ENCODE measurements at regions of chrX and their contacts with region 1.

Region 1: GRCh38 chrX:123960042-123960611 is 1.4 kb upstream of the STAG2 start:
- DNase-seq: peak; percentile 91
- H3K4me3 Mint-ChIP-seq: peak overlapping the region; percentile 96
- H3K27ac Mint-ChIP-seq: peak overlapping the region; percentile 99
- H3K4me1 Mint-ChIP-seq: peaks cover 13% of the 10 kb centered on the region
- H3K27me3 Mint-ChIP-seq: no peaks in the 10 kb centered on the region

Region 2: GRCh38 chrX:122014531-122014930 is 1945.6 kb before region 1 on chrX:
- CTCF ChIA-PET with region 1: no interaction called
- intact Hi-C with region 1: no loop called
- DNase-seq: no peak
- H3K4me3 Mint-ChIP-seq: no peak overlapping the region
- H3K27ac Mint-ChIP-seq: no peak overlapping the region
- H3K4me1 Mint-ChIP-seq: no peaks in the 10 kb centered on the region
- H3K27me3 Mint-ChIP-seq: no peaks in the 10 kb centered on the region

Region 3: GRCh38 chrX:123603491-123603890 is 356.6 kb before region 1 on chrX:
- CTCF ChIA-PET with region 1: no interaction called
- intact Hi-C with region 1: no loop called
- DNase-seq: no peak
- H3K4me3 Mint-ChIP-seq: no peak overlapping the region
- H3K27ac Mint-ChIP-seq: no peak overlapping the region
- H3K4me1 Mint-ChIP-seq: no peaks in the 10 kb centered on the region
- H3K27me3 Mint-ChIP-seq: no peaks in the 10 kb centered on the region

Region 4: DNA sequence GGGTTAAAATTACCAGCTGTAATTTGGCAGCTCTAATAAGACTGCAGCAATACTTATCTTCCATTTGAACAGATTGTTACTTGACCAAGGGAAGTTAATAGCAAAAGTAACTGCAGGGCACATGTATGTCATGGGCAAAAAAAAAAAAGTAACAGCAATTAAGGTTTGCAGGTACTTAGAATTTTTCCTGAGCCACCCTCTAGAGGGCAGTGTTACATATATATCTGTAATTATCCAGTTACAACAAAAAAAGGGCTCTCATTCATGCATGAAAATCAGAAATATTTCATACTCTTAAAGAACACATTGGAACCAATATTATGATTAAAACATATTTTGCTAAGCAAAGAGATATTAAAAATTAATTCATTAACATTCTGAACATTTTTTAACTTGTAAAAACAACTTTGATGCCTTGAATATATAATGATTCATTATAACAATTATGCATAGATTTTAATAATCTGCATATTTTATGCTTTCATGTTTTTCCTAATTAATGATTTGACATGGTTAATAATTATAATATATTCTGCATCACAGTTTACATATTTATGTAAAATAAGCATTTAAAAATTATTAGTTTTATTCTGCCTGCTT is 75.2 kb before region 1 on chrX:
- CTCF ChIA-PET with region 1: no interaction called
- intact Hi-C with region 1: loop called (anchors 2 kb)
- DNase-seq: peak; percentile 42
- H3K4me3 Mint-ChIP-seq: no peak overlapping the region
- H3K27ac Mint-ChIP-seq: no peak overlapping the region
- H3K4me1 Mint-ChIP-seq: peaks cover 8% of the 10 kb centered on the region
- H3K27me3 Mint-ChIP-seq: no peaks in the 10 kb centered on the region

Region 5: DNA sequence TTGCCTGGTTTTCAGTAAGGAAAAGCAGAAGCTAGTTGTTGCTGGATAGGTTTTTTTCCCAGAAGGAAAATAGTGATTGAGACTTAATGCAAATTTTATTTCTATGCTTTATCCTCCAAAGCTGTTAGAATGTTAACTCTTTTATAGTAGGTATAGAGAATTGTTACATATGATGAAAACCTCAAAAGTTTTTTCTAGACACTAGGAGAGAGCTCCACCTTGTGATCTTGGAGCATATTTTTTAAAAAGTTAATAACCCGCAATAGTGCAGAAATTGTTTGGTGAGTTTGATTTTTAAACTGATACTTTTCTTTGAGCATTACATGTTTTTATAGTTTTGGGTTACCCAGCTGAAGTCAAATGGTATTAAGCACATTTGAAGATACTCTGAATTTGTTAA is 57.9 kb after region 1 on chrX:
- CTCF ChIA-PET with region 1: interaction called, 8 read pairs
- intact Hi-C with region 1: loop called (anchors 1 kb)
- DNase-seq: no peak
- H3K4me3 Mint-ChIP-seq: no peak overlapping the region
- H3K27ac Mint-ChIP-seq: no peak overlapping the region
- H3K4me1 Mint-ChIP-seq: peaks cover 30% of the 10 kb centered on the region
- H3K27me3 Mint-ChIP-seq: no peaks in the 10 kb centered on the region

Region 6: GRCh38 chrX:124151195-124151594 is 191.1 kb after region 1 on chrX:
- CTCF ChIA-PET with region 1: no interaction called
- intact Hi-C with region 1: no loop called
- DNase-seq: no peak
- H3K4me3 Mint-ChIP-seq: no peak overlapping the region
- H3K27ac Mint-ChIP-seq: no peak overlapping the region
- H3K4me1 Mint-ChIP-seq: no peaks in the 10 kb centered on the region
- H3K27me3 Mint-ChIP-seq: no peaks in the 10 kb centered on the region

Region 7: DNA sequence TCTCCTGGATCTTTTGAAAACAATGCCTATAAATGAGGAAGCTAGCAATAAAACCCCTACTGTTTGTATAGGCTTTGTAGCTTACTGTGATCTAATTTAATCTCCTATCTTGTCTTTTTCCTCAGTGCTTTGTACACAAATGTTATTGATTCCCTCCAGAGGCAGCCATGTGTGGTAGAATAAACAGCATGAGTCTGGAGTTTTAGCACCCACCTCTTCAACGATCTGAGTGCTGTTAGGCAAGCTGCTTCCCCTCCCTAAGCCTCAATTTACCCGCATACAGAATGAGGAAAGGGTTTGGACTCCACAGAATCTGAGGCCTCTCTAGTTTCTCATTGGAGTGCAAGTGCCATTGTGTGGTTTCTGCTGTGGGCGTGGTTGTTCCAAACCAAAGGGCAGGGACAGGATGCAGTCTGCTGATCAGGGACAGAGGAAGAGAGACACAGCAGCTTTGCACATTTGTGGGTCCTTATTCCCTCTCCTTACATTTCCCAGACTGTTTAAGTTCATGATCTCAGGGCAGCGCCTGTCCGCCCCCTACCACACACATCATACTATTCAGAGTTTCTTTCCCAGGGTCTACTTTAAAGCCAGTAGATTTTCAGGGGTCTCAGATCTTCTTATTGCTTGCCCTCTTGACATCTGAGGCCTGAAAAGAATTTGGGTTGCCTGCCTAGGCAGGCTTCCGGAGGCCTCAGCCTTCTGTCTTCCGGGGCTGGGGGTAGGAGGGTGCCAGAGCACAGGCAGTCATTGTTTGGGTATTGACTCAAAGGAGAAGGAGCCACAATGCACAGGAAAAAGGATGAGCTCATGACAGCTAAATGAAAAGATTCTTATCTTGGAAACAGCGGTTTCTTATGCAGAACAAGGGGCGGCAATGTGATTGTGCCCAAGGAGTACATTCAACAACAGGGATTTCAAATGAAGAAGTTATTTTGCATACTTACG is 257.5 kb after region 1 on chrX:
- CTCF ChIA-PET with region 1: no interaction called
- intact Hi-C with region 1: loop called (anchors 1 kb)
- DNase-seq: peak; percentile 68
- H3K4me3 Mint-ChIP-seq: peak overlapping the region; percentile 60
- H3K27ac Mint-ChIP-seq: peak overlapping the region; percentile 93
- H3K4me1 Mint-ChIP-seq: peaks cover 76% of the 10 kb centered on the region
- H3K27me3 Mint-ChIP-seq: no peaks in the 10 kb centered on the region

Region 8: DNA sequence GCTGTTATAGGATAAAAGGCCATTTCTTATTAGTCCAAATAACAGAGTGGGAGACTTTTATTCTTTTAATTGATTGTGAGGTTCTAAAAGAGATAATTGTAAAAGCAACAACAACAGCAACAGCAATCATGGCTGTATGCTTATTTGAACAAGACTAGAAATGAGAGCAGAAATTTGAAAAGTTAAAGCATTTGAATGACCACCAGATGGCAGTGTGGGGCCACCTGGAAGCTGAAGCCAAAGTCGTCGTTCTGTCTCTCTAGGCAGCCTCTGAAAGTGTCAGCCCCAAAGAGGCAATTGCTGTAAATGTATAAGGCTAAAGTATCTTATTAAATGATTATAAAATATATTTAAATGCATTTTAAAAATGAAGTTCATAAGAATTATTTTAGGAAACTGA is 428.4 kb after region 1 on chrX:
- CTCF ChIA-PET with region 1: no interaction called
- intact Hi-C with region 1: loop called (anchors 5 kb)
- DNase-seq: peak; percentile 75
- H3K4me3 Mint-ChIP-seq: no peak overlapping the region
- H3K27ac Mint-ChIP-seq: no peak overlapping the region
- H3K4me1 Mint-ChIP-seq: peaks cover 13% of the 10 kb centered on the region
- H3K27me3 Mint-ChIP-seq: no peaks in the 10 kb centered on the region

Region 9: GRCh38 chrX:125295337-125295736 is 1335.2 kb after region 1 on chrX:
- CTCF ChIA-PET with region 1: no interaction called
- intact Hi-C with region 1: loop called (anchors 5 kb)
- DNase-seq: peak; percentile 8
- H3K4me3 Mint-ChIP-seq: no peak overlapping the region
- H3K27ac Mint-ChIP-seq: peak overlapping the region; percentile 51
- H3K4me1 Mint-ChIP-seq: peaks cover 22% of the 10 kb centered on the region
- H3K27me3 Mint-ChIP-seq: no peaks in the 10 kb centered on the region